ENCODE measurements at regions of chr14 and their contacts with region 1.

Region 1: DNA sequence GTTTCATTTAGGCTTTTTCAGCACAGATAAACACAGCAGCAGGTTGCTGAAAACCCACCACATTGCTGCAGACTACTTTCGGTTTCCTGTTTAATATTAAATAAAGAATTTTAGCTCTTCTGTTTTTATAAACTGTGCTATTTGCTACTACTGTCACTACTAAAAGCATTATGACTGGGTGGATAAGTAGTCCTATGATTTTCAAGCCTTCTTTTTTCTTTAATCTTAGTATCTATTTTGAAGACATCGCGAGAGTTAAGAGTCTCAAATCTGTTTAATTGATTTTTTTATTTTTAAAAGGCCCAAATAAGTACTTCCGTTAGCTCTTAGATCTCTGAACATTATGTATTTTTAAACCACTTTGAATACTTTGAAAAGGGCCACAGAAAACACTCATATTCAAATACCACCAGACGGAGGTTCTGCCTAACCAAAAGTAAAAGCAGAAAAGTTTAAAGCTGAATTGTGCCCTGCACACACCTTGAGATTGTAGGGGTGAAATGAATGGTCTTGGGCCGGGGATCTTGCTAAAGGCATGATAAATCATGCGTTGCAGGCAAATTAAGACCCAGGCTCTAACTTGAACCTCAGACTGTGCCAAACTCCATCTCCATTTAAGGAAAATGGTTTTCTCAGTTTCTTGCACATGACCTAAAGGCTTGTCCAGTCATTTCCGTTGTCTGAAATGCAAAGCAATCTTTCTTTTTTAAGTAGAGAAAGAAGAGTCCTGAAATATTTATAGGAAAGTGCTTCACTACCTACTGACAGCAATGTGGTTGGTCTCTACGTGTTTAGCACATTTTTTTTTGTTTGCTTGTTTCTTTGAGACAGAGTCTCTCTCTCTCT is 13.6 kb upstream of the FOXN3 start:
- DNase-seq: peak; percentile 48
- H3K4me3 Mint-ChIP-seq: peak overlapping the region; percentile 76
- H3K27ac Mint-ChIP-seq: peak overlapping the region; percentile 95
- H3K4me1 Mint-ChIP-seq: peaks cover 62% of the 10 kb centered on the region
- H3K27me3 Mint-ChIP-seq: no peaks in the 10 kb centered on the region

Region 2: DNA sequence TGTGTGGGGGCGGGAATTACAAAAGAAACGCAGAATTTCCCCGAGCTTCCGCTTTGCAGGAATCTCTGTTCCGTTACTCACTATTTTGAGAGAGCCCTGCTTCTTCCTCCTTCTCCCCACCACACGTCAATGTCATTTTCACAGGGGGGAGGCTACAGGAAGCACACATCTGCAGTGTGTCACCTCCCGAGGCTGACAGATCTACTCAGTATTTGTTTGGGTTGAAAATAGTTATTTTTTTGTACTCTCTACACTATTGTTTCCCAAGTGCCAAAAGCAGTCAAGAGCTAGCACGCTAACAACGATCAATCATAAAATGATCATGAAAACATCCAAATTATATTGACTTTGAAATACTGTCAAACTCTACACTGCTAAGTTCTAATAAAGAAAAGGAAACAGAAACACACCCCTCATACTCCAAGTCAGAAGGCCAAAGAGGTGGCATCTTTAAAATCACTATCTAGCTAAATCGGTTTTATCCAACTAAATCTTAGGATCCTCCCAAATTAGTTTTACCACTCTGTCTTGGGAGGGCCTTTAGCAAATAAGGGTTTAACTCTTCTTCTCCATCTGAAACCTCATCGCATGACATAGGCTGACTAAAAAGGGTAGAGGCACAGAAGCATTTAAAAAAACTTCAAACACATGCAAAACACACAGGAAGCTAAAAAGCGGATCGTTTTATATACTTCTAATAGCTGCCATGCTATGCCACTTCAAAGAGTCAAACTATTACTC is 65.4 kb before region 1 on chr14:
- CTCF ChIA-PET with region 1: no interaction called
- POLR2A ChIA-PET with region 1: interaction called, 12 read pairs
- DNase-seq: peak; percentile 57
- H3K4me3 Mint-ChIP-seq: peak overlapping the region; percentile 64
- H3K27ac Mint-ChIP-seq: peak overlapping the region; percentile 78
- H3K4me1 Mint-ChIP-seq: peaks cover 30% of the 10 kb centered on the region
- H3K27me3 Mint-ChIP-seq: no peaks in the 10 kb centered on the region

Region 3: DNA sequence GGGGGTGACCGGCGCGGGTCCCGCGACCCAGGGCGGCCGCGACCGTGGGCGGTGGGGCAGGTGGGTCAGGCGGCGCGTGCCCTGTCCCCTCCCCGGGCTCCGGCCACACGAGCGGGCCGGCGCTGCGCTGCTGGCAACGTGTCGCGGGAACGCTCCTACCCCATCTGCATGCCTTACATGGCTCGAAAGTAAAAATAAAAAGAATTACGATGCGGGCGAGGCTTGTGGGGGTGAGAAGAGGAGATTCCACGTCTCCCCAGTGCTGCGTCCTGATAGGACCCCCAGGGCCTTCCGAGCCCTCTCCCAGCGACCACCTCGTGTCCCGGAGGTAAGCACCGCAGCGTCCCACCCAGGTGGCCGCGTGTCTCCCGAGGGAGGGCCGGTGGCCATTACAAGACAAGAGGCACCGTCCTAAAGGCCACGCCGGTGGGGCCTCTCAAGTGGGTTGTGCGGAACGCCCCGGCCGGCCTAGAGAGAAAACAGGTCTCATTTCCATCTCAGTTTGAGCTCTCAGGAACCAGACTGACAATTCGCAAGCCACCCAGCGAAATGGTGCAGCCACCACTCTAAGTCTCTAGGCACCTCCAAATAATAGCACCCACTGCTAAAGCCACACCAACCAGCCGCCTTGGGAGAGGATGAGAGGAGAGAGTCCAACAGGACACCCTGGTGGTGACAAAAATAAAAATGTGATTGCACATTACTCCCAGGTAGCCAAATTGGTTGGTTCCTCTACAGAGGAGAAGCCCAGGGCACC is 13.0 kb before region 1 on chr14:
- CTCF ChIA-PET with region 1: interaction called, 11 read pairs
- POLR2A ChIA-PET with region 1: interaction called, 20 read pairs
- DNase-seq: peak; percentile 69
- H3K4me3 Mint-ChIP-seq: peak overlapping the region; percentile 74
- H3K27ac Mint-ChIP-seq: peak overlapping the region; percentile 75
- H3K4me1 Mint-ChIP-seq: peaks cover 34% of the 10 kb centered on the region
- H3K27me3 Mint-ChIP-seq: no peaks in the 10 kb centered on the region

Region 4: DNA sequence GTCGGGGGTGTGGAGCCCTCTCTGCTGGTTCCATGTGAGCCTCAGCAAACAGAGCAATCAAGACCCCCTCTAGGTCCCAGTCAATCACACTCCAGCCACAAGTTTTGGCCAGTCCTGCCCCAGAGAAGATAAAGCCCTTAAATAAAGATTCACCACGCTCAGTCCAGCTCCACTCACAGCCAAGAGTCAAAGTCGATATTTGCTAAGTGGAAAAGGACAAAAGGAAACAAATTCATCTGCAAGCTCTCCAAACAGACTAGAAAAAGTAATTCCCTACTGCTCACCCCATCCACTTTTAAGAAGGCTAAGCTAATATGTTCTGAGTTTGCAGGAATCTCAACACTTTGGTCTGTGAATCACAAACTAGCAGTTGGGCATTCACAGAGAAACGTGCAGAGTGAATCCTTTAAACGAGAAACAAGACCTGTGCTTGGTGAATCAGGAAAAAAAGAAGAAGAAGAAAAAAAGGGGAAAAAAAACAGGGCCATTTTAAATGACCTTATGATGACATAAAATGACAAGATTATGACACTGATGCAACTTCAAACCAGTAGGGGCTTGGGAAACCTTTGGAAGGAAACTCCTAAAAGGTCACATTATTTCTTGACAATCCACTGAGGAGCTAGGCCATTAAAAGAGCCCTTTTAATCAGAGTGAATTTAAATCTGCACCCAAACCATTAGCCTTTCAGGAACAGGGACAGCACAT is 28.3 kb after region 1 on chr14:
- CTCF ChIA-PET with region 1: no interaction called
- POLR2A ChIA-PET with region 1: no interaction called
- DNase-seq: no peak
- H3K4me3 Mint-ChIP-seq: no peak overlapping the region
- H3K27ac Mint-ChIP-seq: no peak overlapping the region
- H3K4me1 Mint-ChIP-seq: peaks cover 4% of the 10 kb centered on the region
- H3K27me3 Mint-ChIP-seq: no peaks in the 10 kb centered on the region

Region 5: GRCh38 chr14:89509891-89510290 is 79.3 kb after region 1 on chr14:
- CTCF ChIA-PET with region 1: interaction called, 4 read pairs
- POLR2A ChIA-PET with region 1: interaction called, 10 read pairs
- DNase-seq: no peak
- H3K4me3 Mint-ChIP-seq: no peak overlapping the region
- H3K27ac Mint-ChIP-seq: peak overlapping the region; percentile 95
- H3K4me1 Mint-ChIP-seq: peaks cover 59% of the 10 kb centered on the region
- H3K27me3 Mint-ChIP-seq: no peaks in the 10 kb centered on the region

Region 6: DNA sequence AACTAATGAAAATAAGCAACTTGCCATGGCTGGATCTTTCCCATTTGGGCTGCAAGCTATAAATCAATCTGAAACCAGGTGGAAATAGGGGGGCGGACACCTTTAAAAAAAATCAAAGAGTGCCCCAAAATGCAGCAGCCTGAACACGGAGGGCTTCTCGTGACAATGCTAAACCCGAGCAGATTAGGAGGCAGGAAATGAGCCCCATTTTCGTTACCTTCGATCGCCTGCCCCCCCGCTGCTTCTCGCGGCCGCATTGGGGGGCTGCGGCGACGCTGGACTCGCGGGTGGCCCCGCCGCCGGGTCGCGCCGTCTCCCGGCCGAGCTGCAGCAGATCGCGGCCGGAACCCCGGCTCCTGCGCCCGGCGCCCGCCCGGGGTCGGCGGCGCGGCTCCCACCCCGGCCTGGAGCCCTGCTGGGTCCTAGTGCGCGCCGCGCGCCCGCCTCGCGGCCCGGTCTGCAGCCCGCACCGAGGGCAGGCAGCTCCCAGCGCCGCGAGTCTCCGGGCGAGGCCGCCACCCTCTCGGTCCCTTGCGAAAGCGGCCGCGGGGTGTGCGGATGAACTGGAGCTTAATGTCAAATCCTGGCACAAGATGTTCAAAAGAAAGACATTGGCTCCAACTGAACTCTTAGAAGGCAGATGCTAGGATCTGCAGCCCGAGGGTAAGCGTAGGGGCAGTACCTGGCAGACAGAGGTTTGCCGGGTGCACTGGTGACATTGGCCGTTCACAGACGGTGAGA is 188.4 kb after region 1 on chr14:
- CTCF ChIA-PET with region 1: interaction called, 5 read pairs
- POLR2A ChIA-PET with region 1: interaction called, 29 read pairs
- DNase-seq: peak; percentile 77
- H3K4me3 Mint-ChIP-seq: peak overlapping the region; percentile 95
- H3K27ac Mint-ChIP-seq: peak overlapping the region; percentile 95
- H3K4me1 Mint-ChIP-seq: peaks cover 61% of the 10 kb centered on the region
- H3K27me3 Mint-ChIP-seq: no peaks in the 10 kb centered on the region